Common myeloid progenitor, CD34-positive (primary cell): ENCODE measurements at regions of chr3 and their contacts with region 1.

Region 1: GRCh38 chr3:109081746-109082510 is 36.0 kb downstream of the MORC1 start:
- DNase-seq: peak; percentile 73 to 93 (median 91)
- H3K4me3 ChIP-seq: no peak overlapping the region
- H3K27ac ChIP-seq: no peak overlapping the region
- H3K4me1 ChIP-seq: peaks cover 0 to 3% (median 0%) of the 10 kb centered on the region in 4 experiments
- H3K27me3 ChIP-seq: no peaks in the 10 kb centered on the region

Region 2: GRCh38 chr3:109023656-109024254 is 58.2 kb before region 1 on chr3:
- CTCF ChIA-PET with region 1: interaction called, 54 read pairs
- POLR2A ChIA-PET with region 1: no interaction called
- DNase-seq: peak; percentile 59 to 80 (median 73)
- H3K4me3 ChIP-seq: no peak overlapping the region
- H3K27ac ChIP-seq: no peak overlapping the region
- H3K4me1 ChIP-seq: no peaks in the 10 kb centered on the region
- H3K27me3 ChIP-seq: no peaks in the 10 kb centered on the region

Region 3: GRCh38 chr3:110016235-110016815 is 934.4 kb after region 1 on chr3:
- CTCF ChIA-PET with region 1: no interaction called
- POLR2A ChIA-PET with region 1: no interaction called
- DNase-seq: no peak
- H3K4me3 ChIP-seq: no peak overlapping the region
- H3K27ac ChIP-seq: no peak overlapping the region
- H3K4me1 ChIP-seq: no peaks in the 10 kb centered on the region
- H3K27me3 ChIP-seq: no peaks in the 10 kb centered on the region